ENCODE measurements at regions of chr21 and their contacts with region 1.

Region 1: GRCh38 chr21:42724226-42724920 is 71.0 kb downstream of the PDE9A start:
- DNase-seq: peak; percentile 89
- ATAC-seq: peak; percentile 86
- H3K4me3 ChIP-seq: peak overlapping the region; percentile 10 to 43; a peak in 2 of 4 replicates
- H3K27ac ChIP-seq: peak overlapping the region; percentile 72
- H3K4me1 ChIP-seq: peaks cover 66 to 69% of the 10 kb centered on the region in 2 experiments
- H3K27me3 ChIP-seq: no peaks in the 10 kb centered on the region
- CTCF ChIP-seq: no peak
- POLR2A ChIP-seq: no peak
- RAD21 ChIP-seq: no peak

Region 2: DNA sequence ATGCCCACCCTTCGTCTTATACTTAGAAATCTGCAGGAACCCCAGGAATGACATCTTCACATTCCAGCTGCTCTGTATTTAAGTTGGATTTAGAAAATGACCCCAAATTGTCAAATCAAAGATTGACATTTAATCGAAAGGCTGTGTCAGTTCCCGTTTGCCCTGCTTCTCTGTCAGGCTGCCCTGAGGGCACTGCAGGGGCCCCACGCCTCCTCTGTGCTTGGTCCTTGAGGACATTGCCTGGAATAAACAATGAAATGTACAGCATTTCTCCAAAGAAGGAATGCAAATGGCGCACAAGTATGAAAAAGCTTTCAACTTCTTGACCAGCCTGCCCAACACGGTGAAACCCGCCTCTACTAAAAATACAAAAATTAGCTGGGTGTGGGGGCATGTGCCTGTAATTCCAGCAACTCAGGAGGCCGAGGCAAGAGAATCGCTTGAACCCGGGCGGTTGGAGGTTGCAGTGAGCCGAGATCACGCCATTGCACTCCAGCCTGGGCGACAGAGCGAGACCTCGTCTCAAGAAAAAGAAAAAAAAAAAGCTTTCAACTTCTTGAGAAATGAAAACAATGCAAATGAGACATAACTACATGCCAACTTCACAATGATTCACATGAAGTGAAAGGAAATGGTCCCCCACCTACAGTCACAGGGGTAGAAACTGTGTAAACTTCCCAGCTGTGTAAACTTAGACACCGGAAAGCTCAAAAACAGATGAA is 331.5 kb before region 1 on chr21:
- CTCF ChIA-PET with region 1: no interaction called
- POLR2A ChIA-PET with region 1: no interaction called
- RAD21 ChIA-PET with region 1: no interaction called
- intact Hi-C with region 1: no loop called
- DNase-seq: no peak
- ATAC-seq: no peak
- H3K4me3 ChIP-seq: no peak overlapping the region
- H3K27ac ChIP-seq: no peak overlapping the region
- H3K4me1 ChIP-seq: no peaks in the 10 kb centered on the region
- H3K27me3 ChIP-seq: peaks cover 3% of the 10 kb centered on the region; the same call in 1 of the 2 replicates
- CTCF ChIP-seq: no peak
- POLR2A ChIP-seq: no peak
- RAD21 ChIP-seq: no peak

Region 3: GRCh38 chr21:42614811-42615659 is 109.3 kb before region 1 on chr21:
- CTCF ChIA-PET with region 1: no interaction called
- POLR2A ChIA-PET with region 1: no interaction called
- RAD21 ChIA-PET with region 1: no interaction called
- intact Hi-C with region 1: loop called (anchors 10 kb)
- DNase-seq: no peak
- ATAC-seq: peak; percentile 32; the same call in 1 of the 2 replicates
- H3K4me3 ChIP-seq: no peak overlapping the region
- H3K27ac ChIP-seq: no peak overlapping the region
- H3K4me1 ChIP-seq: no peaks in the 10 kb centered on the region; a peak in 1 of 4 replicates
- H3K27me3 ChIP-seq: peaks cover 3% of the 10 kb centered on the region; the same call in 1 of the 2 replicates
- CTCF ChIP-seq: no peak
- POLR2A ChIP-seq: no peak
- RAD21 ChIP-seq: no peak

Region 4: DNA sequence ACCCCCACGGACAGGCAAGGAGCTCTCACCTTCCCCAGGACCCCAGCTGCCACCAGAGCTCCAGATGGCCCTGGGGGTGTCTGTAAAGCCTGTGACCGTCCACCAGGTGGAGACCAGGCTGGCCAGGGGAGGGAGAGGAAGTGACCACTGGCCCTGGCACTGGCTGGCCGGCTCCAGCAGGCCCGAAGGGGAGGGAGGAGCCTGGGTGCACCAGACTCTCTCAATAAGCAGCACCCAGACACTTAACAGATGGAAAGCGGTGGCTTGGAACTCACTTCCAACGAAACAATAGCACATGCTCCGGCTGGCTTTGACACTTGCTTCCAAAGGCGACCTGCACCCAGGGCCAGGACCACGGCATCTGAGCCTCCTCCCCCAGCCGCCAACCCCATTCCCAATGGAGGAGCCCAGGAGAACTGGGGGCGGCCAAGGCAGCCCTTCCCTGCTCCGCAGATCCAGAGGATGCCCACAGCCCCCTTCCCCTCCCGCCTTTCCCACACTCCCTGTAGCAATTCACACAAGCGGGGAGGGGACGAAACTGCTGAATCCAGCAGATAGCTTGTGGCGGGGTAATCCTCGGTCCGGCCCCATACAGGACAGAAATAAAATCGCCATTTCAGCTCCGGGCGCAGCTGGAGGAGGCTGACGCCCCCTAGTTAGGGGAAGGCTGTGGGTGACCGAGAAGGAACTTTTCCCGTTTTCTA is 71.7 kb before region 1 on chr21:
- CTCF ChIA-PET with region 1: no interaction called
- POLR2A ChIA-PET with region 1: no interaction called
- RAD21 ChIA-PET with region 1: no interaction called
- intact Hi-C with region 1: loop called (anchors 10 kb)
- DNase-seq: no peak
- ATAC-seq: peak; percentile 44
- H3K4me3 ChIP-seq: no peak overlapping the region
- H3K27ac ChIP-seq: no peak overlapping the region; the same call in 1 of the 2 replicates
- H3K4me1 ChIP-seq: peaks cover 18 to 33% of the 10 kb centered on the region in 2 experiments; a peak in 3 of 4 replicates
- H3K27me3 ChIP-seq: no peaks in the 10 kb centered on the region
- CTCF ChIP-seq: peak in 2 of 3 experiments; percentile 30 to 45; a peak in 3 of 6 replicates
- POLR2A ChIP-seq: no peak
- RAD21 ChIP-seq: no peak

Region 5: GRCh38 chr21:42760951-42761680 is 36.7 kb after region 1 on chr21:
- CTCF ChIA-PET with region 1: no interaction called
- POLR2A ChIA-PET with region 1: no interaction called
- RAD21 ChIA-PET with region 1: no interaction called
- intact Hi-C with region 1: no loop called
- DNase-seq: no peak
- ATAC-seq: no peak
- H3K4me3 ChIP-seq: no peak overlapping the region
- H3K27ac ChIP-seq: no peak overlapping the region
- H3K4me1 ChIP-seq: no peaks in the 10 kb centered on the region
- H3K27me3 ChIP-seq: no peaks in the 10 kb centered on the region
- CTCF ChIP-seq: no peak
- POLR2A ChIP-seq: no peak
- RAD21 ChIP-seq: no peak